CD4-positive, alpha-beta T cell (primary cell): ENCODE measurements at regions of chr9 and their contacts with region 1.

Region 1: GRCh38 chr9:97638666-97639065 is 5.0 kb downstream of the NCBP1 start:
- DNase-seq: peak in 1 of 14 experiments; percentile 10
- ATAC-seq: no peak
- H3K4me3 ChIP-seq: no peak overlapping the region
- H3K4me3 Mint-ChIP-seq: no peak overlapping the region
- H3K27ac ChIP-seq: no peak overlapping the region
- H3K27ac Mint-ChIP-seq: no peak overlapping the region
- H3K4me1 ChIP-seq: peaks cover 20% of the 10 kb centered on the region
- H3K4me1 Mint-ChIP-seq: peaks cover 71% of the 10 kb centered on the region
- H3K27me3 ChIP-seq: no peaks in the 10 kb centered on the region
- H3K27me3 Mint-ChIP-seq: no peaks in the 10 kb centered on the region
- CTCF ChIP-seq: no peak

Region 2: GRCh38 chr9:97682242-97682641 is 43.6 kb after region 1 on chr9:
- CTCF ChIA-PET with region 1: no interaction called
- POLR2A ChIA-PET with region 1: interaction called, 3 read pairs
- intact Hi-C with region 1: loop called in 1 of 2 experiments (anchors 5 kb)
- DNase-seq: no peak
- ATAC-seq: no peak
- H3K4me3 ChIP-seq: no peak overlapping the region
- H3K4me3 Mint-ChIP-seq: no peak overlapping the region
- H3K27ac ChIP-seq: no peak overlapping the region
- H3K27ac Mint-ChIP-seq: peak overlapping the region; percentile 44
- H3K4me1 ChIP-seq: no peaks in the 10 kb centered on the region
- H3K4me1 Mint-ChIP-seq: peaks cover 23% of the 10 kb centered on the region
- H3K27me3 ChIP-seq: no peaks in the 10 kb centered on the region
- H3K27me3 Mint-ChIP-seq: no peaks in the 10 kb centered on the region
- CTCF ChIP-seq: no peak

Region 3: DNA sequence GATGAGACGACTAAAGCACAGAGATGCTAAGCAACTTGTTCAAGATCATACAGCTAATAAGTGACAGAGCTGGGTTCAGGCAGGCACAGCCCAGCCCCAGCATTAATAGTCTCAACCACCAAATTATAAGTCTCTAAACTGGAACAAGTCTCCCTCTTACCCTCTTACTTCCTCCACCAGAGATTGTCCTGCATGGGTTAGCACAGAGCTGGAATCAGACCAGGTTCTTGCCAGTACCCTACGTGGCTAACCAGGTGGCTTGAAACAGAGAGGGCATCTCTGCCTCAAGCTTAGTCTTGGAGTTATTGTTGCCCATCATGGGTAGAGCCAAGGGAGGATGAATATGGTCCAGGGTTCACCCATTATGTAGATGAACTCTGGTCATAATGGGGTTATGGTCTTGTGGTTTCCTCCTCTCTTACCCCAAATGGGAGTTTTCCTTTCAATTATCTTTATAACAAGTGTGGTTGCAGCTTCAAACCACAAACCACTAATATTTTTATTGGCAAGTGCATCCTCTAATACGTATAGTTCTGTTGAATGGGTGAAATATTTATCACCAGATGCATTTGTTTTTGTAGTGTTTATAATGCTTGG is 66.8 kb after region 1 on chr9:
- CTCF ChIA-PET with region 1: no interaction called
- POLR2A ChIA-PET with region 1: no interaction called
- intact Hi-C with region 1: no loop called
- DNase-seq: peak in 3 of 14 experiments; percentile 25 to 45 (median 38)
- ATAC-seq: peak; percentile 39
- H3K4me3 ChIP-seq: no peak overlapping the region
- H3K4me3 Mint-ChIP-seq: no peak overlapping the region
- H3K27ac ChIP-seq: no peak overlapping the region
- H3K27ac Mint-ChIP-seq: no peak overlapping the region
- H3K4me1 ChIP-seq: peaks cover 25% of the 10 kb centered on the region
- H3K4me1 Mint-ChIP-seq: peaks cover 12% of the 10 kb centered on the region
- H3K27me3 ChIP-seq: peaks cover 0 to 5% of the 10 kb centered on the region in 2 experiments
- H3K27me3 Mint-ChIP-seq: peaks cover 18% of the 10 kb centered on the region
- CTCF ChIP-seq: no peak